GM12878 (cell line): ENCODE measurements at regions of chr17 and their contacts with region 1.

Region 1: DNA sequence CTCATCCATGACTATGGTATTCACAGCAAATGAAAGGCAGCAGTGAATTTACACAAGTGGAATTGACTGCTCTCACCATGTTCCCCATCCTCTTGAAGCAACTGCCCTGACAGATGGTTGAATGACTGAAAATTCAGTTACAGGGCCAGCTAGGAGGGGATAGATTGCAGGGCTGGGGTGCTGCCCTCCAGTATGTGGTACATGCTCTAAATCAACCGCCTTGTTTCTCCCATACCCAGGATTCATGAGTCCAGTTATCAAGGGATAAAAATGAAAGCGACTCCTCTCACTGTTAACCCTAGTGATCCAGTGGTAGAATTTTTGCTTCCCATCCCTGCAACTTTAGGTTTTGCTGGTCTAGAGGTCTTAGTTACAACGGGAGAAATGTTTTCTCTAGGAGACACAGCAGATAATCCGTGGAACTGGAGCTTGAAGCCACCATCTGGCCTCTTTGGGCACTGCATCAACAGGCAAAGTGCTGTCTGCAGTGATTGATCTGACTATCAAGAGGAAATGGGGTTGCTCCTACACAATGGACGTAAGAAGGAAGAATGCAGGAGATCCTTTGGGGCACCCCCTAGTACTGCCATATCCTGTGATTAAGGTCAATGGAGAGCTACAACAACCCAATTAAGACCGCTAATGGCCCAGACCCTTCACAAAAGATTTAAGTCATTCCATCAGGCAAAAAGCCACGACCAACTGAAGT is 32.0 kb downstream of the SCPEP1 start:
- DNase-seq: peak; percentile 51
- ATAC-seq: peak; percentile 89
- H3K4me3 ChIP-seq: no peak overlapping the region
- H3K27ac ChIP-seq: no peak overlapping the region
- H3K4me1 ChIP-seq: peaks cover 11% of the 10 kb centered on the region
- H3K27me3 ChIP-seq: no peaks in the 10 kb centered on the region
- CTCF ChIP-seq: peak; percentile 79 to 88 (median 80)
- EP300 ChIP-seq: no peak
- POLR2A ChIP-seq: no peak
- RAD21 ChIP-seq: peak; percentile 70

Region 2: GRCh38 chr17:56926701-56927590 is 82.9 kb before region 1 on chr17:
- CTCF ChIA-PET with region 1: no interaction called
- POLR2A ChIA-PET with region 1: no interaction called
- RAD21 ChIA-PET with region 1: no interaction called
- SMC1A ChIA-PET with region 1: no interaction called
- in situ Hi-C with region 1: no loop called
- intact Hi-C with region 1: no loop called
- DNase-seq: no peak
- ATAC-seq: no peak
- H3K4me3 ChIP-seq: no peak overlapping the region
- H3K27ac ChIP-seq: no peak overlapping the region
- H3K4me1 ChIP-seq: no peaks in the 10 kb centered on the region
- H3K27me3 ChIP-seq: no peaks in the 10 kb centered on the region
- CTCF ChIP-seq: no peak
- EP300 ChIP-seq: no peak
- POLR2A ChIP-seq: no peak
- RAD21 ChIP-seq: no peak

Region 3: GRCh38 chr17:56960596-56961538 is 49.0 kb before region 1 on chr17 and contains the start of gene COIL:
- CTCF ChIA-PET with region 1: interaction called, 6 read pairs
- POLR2A ChIA-PET with region 1: no interaction called
- RAD21 ChIA-PET with region 1: no interaction called
- SMC1A ChIA-PET with region 1: interaction called, 5 read pairs
- in situ Hi-C with region 1: no loop called
- intact Hi-C with region 1: loop called (anchors 5 kb)
- DNase-seq: peak; percentile 65
- ATAC-seq: peak; percentile 99
- H3K4me3 ChIP-seq: peak within 1 kb of the TSS; percentile 95
- H3K27ac ChIP-seq: peak within 1 kb of the TSS; percentile 77
- H3K4me1 ChIP-seq: no peaks in the 10 kb centered on the region; the same call in 1 of the 2 replicates
- H3K27me3 ChIP-seq: no peaks in the 10 kb centered on the region
- CTCF ChIP-seq: peak; percentile 94 to 99 (median 97)
- EP300 ChIP-seq: no peak
- POLR2A ChIP-seq: peak; percentile 93
- RAD21 ChIP-seq: peak; percentile 64
- polyA plus RNA-seq, gene COIL: 14.2 to 16.8 TPM

Region 4: DNA sequence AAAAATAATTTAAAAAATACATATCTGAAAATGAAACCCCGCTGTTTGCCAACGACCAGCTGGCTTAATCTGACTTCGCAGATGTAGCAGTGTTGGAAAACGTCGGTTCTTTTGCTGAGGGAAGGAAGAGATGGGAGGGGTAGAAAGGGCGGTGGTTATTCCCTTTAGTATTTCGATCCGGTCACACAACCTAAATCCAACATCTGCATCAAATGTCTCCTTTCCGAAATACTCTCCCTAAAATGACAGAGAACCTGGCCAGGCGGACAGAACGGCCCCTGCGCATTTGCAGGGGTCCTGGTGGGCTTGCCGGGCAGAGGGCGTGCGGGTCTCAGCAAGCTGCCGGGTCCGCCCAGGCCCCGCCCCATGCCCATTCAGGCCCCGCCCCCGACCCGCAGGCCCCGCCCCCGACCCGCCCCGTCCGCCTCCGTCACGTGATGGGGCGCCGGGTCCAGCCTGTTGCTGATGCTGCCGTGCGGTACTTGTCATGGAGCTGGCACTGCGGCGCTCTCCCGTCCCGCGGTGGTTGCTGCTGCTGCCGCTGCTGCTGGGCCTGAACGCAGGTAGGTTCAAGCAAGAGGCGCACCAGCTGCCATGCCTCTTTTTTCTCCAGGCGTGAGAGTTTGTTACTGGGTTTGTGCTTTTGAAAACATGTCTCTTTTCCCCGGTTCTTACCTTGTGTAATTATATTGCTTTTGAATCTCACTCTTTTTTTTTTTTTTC is 32.1 kb before region 1 on chr17 and contains the start of gene SCPEP1:
- CTCF ChIA-PET with region 1: interaction called, 5 read pairs
- POLR2A ChIA-PET with region 1: interaction called, 3 read pairs
- RAD21 ChIA-PET with region 1: interaction called, 7 read pairs
- SMC1A ChIA-PET with region 1: interaction called, 41 read pairs
- in situ Hi-C with region 1: no loop called
- intact Hi-C with region 1: no loop called
- DNase-seq: no peak
- ATAC-seq: peak; percentile 95
- H3K4me3 ChIP-seq: peak within 1 kb of the TSS; percentile 77
- H3K27ac ChIP-seq: peak within 1 kb of the TSS; percentile 83
- H3K4me1 ChIP-seq: no peaks in the 10 kb centered on the region; the same call in 1 of the 2 replicates
- H3K27me3 ChIP-seq: no peaks in the 10 kb centered on the region
- CTCF ChIP-seq: peak in 1 of 3 experiments; percentile 4; a peak in 1 of 6 replicates
- EP300 ChIP-seq: no peak
- POLR2A ChIP-seq: peak; percentile 94
- RAD21 ChIP-seq: no peak
- polyA plus RNA-seq, gene SCPEP1: 57.7 to 80.2 TPM

Region 5: GRCh38 chr17:57021226-57021940 is 11.5 kb after region 1 on chr17:
- CTCF ChIA-PET with region 1: interaction called, 12 read pairs
- POLR2A ChIA-PET with region 1: interaction called, 3 read pairs
- RAD21 ChIA-PET with region 1: no interaction called
- SMC1A ChIA-PET with region 1: interaction called, 6 read pairs
- in situ Hi-C with region 1: no loop called
- intact Hi-C with region 1: no loop called
- DNase-seq: no peak
- ATAC-seq: no peak
- H3K4me3 ChIP-seq: no peak overlapping the region
- H3K27ac ChIP-seq: no peak overlapping the region
- H3K4me1 ChIP-seq: no peaks in the 10 kb centered on the region
- H3K27me3 ChIP-seq: no peaks in the 10 kb centered on the region; a peak in 1 of 4 replicates
- CTCF ChIP-seq: no peak
- EP300 ChIP-seq: no peak
- POLR2A ChIP-seq: no peak
- RAD21 ChIP-seq: no peak

Region 6: DNA sequence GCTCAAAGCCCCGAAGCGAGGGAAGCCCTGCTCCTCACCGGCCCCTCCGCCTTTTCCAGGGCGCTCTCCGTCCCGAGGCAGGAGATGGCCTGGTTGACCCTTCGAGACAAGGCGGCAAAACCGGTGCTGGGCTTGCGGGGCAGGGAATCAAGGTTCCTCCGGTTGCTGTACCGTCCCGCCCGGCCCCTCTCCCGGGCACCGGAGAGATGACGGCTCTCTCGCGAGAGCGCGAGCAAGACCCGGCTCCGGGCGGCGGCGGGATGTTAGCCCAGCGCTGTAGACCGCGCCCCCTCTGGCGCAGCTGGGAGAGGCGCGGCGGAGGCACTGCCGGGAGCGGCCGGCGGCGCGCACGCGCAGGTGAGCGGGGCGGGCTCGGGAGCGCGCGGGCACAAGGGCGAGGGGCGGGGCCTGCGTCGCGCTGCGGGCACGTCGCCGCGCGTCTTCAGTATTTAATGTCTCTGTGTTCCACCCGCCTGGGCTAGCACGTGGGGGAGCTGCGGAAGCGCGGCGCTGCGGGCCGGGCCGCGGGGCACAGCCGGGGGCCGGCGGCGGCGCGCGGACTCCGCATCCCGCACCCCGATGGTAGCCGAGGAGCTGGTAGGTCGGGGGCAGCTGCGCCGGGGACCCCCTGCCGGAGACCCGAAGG is 75.0 kb after region 1 on chr17 and contains the start of gene AKAP1:
- CTCF ChIA-PET with region 1: interaction called, 12 read pairs
- POLR2A ChIA-PET with region 1: no interaction called
- RAD21 ChIA-PET with region 1: interaction called, 3 read pairs
- SMC1A ChIA-PET with region 1: interaction called, 6 read pairs
- in situ Hi-C with region 1: no loop called
- intact Hi-C with region 1: loop called (anchors 10 kb)
- DNase-seq: peak; percentile 72
- ATAC-seq: peak; percentile 84
- H3K4me3 ChIP-seq: peak within 1 kb of the TSS; percentile 89
- H3K27ac ChIP-seq: peak within 1 kb of the TSS; percentile 88
- H3K4me1 ChIP-seq: peaks cover 30% of the 10 kb centered on the region
- H3K27me3 ChIP-seq: no peaks in the 10 kb centered on the region
- CTCF ChIP-seq: peak in 2 of 3 experiments; percentile 19 to 51; a peak in 3 of 6 replicates
- EP300 ChIP-seq: no peak
- POLR2A ChIP-seq: peak; percentile 98
- RAD21 ChIP-seq: peak; percentile 25; the same call in 1 of the 2 replicates
- polyA plus RNA-seq, gene AKAP1: 11.9 to 15.2 TPM